ENCODE measurements at regions of chr16 and their contacts with region 1.

Region 1: DNA sequence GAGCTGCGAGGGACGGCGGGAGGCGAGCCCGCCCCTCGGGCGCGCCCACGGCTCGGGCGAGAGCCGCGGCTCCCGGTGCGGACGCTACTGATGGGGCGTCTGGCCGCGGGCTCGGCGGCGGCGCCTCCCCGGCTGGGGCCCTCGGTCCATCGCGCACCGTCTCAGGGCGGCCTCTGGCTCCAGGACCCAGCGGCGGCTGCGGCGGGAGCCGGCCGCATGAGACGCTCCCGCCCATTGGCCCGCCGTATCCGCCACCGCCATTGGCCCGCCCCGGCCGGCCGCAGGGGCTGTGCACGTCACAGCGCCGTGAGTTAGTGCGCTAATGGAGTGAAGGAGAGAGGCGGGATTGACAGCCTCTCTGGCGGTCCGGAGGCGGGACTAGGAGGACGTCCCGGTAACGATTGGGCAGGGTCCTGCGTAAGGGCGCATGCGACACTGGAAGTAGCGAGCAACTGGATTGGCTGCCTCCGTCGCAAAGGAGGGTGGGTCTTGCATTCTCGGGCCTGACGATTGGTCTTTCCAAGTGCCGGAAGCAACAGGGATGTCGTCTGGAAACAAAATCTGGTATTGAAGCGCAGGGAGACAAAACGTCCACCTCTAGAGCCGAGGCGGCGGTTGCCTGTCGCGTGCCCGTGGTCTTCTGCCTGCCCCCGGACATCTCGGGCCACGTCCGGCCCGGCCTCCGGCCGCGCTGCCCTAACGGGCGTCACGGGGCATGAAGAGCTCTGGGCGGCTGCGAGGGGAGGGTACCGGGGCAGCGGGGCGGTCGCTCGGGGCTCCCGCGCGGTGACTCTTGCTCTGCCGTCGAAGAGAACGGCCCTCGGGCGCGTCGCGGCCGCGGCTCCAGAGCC is at the start of gene ANKRD11:
- DNase-seq: peak; percentile 98 to 100 (median 99)

Region 2: GRCh38 chr16:89330177-89330856 is 160.3 kb before region 1 on chr16:
- intact Hi-C with region 1: loop called (anchors 10 kb)
- DNase-seq: peak in 9 of 42 donors; percentile 36 to 72 (median 53)

Region 3: GRCh38 chr16:89442990-89443731 is 47.5 kb before region 1 on chr16:
- intact Hi-C with region 1: no loop called
- DNase-seq: peak in 17 of 42 donors; percentile 19 to 67 (median 36)

Region 4: DNA sequence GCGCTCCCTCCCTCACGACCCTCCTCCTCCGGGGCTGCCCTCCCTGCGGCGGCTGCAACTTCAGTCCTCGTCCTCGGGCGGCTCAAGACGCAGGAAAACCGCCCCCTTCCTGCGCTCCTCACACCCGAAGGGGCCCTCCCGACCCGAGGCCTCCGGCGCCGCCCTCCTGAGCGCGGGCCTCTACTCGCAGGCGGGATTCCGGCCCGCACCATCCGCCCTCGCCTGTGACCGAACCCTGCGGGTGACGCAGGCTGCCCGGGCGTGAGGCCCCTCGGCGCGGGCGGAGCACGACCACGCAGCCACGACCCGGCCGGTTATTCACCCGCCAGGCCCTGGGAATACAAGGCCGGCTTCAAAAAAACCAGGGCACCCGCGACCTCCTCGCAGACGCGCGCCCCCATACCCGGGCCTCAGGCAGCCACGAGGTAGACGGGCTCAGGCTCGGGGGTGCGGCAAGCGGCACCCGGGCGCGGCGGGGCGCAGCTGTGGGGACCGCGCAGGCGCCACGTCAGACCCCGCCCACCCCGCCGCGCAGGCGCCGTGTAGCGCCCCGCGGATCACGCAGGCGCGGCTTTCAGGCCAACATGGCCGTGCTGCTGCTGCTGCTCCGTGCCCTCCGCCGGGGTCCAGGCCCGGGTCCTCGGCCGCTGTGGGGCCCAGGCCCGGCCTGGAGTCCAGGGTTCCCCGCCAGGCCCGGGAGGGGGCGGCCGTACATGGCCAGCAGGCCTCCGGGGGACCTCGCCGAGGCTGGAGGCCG is 17.4 kb after region 1 on chr16 and contains the start of gene SPG7:
- intact Hi-C with region 1: loop called (anchors 1 kb)
- DNase-seq: peak; percentile 48 to 92 (median 83)